B cell (primary cell): ENCODE measurements at regions of chr18 and their contacts with region 1.

Region 1: GRCh38 chr18:45879681-45880655 is 54.5 kb downstream of the SIGLEC15 start:
- DNase-seq: peak; percentile 76
- ATAC-seq: peak; percentile 95
- H3K4me3 ChIP-seq: no peak overlapping the region
- H3K4me3 Mint-ChIP-seq: no peak overlapping the region
- H3K27ac ChIP-seq: no peak overlapping the region
- H3K27ac Mint-ChIP-seq: no peak overlapping the region
- H3K4me1 ChIP-seq: peaks cover 2 to 6% of the 10 kb centered on the region in 2 donors
- H3K4me1 Mint-ChIP-seq: peaks cover 9% of the 10 kb centered on the region
- H3K27me3 ChIP-seq: no peaks in the 10 kb centered on the region
- H3K27me3 Mint-ChIP-seq: no peaks in the 10 kb centered on the region
- CTCF ChIP-seq: peak; percentile 100

Region 2: GRCh38 chr18:45621061-45621511 is 258.9 kb before region 1 on chr18:
- CTCF ChIA-PET with region 1: interaction called, 10 read pairs
- POLR2A ChIA-PET with region 1: no interaction called
- intact Hi-C with region 1: loop called (anchors 1 kb)
- DNase-seq: peak; percentile 58
- ATAC-seq: peak; percentile 63
- H3K4me3 ChIP-seq: no peak overlapping the region
- H3K4me3 Mint-ChIP-seq: no peak overlapping the region
- H3K27ac ChIP-seq: no peak overlapping the region
- H3K27ac Mint-ChIP-seq: no peak overlapping the region
- H3K4me1 ChIP-seq: no peaks in the 10 kb centered on the region
- H3K4me1 Mint-ChIP-seq: peaks cover 1% of the 10 kb centered on the region
- H3K27me3 ChIP-seq: peaks cover 0 to 2% (median 0%) of the 10 kb centered on the region in 4 experiments
- H3K27me3 Mint-ChIP-seq: peaks cover 19% of the 10 kb centered on the region
- CTCF ChIP-seq: peak; percentile 99

Region 3: DNA sequence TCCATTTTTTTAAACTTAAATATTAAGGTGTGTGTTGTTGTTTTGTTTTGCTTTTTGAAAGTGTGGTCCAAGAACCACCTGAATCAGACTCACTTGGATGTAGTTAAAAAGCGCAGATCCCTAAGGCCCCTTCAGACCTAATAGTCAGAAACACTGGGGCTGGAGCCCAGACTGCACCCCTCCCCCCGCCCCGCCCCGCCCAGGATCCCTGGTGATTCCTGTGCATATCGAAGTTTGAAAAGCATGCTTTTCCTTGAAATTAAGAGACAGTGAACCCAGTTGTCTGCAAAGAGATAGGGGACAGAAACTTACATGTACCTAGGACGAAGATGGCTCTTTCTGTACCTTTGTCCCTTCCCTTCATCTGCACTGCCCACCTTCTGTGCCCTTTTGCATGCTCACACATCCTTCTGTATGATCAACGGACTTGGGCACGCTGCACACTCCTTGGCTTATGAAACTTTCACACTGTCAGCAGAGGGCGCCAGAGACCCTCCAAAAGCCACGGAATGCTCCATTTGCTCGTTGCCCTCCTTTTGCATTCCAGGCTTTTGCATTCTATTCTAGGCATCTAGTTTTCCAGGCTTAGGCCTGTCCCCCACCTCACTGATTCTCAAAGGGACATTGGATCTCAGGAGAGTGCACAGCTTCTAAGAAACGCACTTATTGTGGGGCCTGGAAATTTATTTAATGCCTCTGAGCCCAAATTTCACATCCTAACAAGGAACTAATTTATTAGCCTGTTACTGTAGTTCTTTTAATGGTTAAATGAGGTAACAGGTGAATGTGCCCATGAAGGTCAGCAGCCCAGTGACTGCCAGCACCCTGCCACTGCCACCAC is 188.8 kb before region 1 on chr18:
- CTCF ChIA-PET with region 1: interaction called, 139 read pairs
- POLR2A ChIA-PET with region 1: no interaction called
- intact Hi-C with region 1: loop called (anchors 1 kb)
- DNase-seq: peak; percentile 77
- ATAC-seq: no peak
- H3K4me3 ChIP-seq: no peak overlapping the region
- H3K4me3 Mint-ChIP-seq: no peak overlapping the region
- H3K27ac ChIP-seq: no peak overlapping the region
- H3K27ac Mint-ChIP-seq: peak overlapping the region; percentile 43
- H3K4me1 ChIP-seq: peaks cover 32 to 44% of the 10 kb centered on the region in 2 donors
- H3K4me1 Mint-ChIP-seq: peaks cover 40% of the 10 kb centered on the region
- H3K27me3 ChIP-seq: no peaks in the 10 kb centered on the region
- H3K27me3 Mint-ChIP-seq: peaks cover 7% of the 10 kb centered on the region
- CTCF ChIP-seq: peak; percentile 86

Region 4: GRCh38 chr18:45730832-45731575 is 149.0 kb before region 1 on chr18:
- CTCF ChIA-PET with region 1: interaction called, 70 read pairs
- POLR2A ChIA-PET with region 1: no interaction called
- intact Hi-C with region 1: no loop called
- DNase-seq: no peak
- ATAC-seq: no peak
- H3K4me3 ChIP-seq: no peak overlapping the region
- H3K4me3 Mint-ChIP-seq: no peak overlapping the region
- H3K27ac ChIP-seq: no peak overlapping the region
- H3K27ac Mint-ChIP-seq: no peak overlapping the region
- H3K4me1 ChIP-seq: no peaks in the 10 kb centered on the region
- H3K4me1 Mint-ChIP-seq: no peaks in the 10 kb centered on the region
- H3K27me3 ChIP-seq: no peaks in the 10 kb centered on the region
- H3K27me3 Mint-ChIP-seq: peaks cover 5% of the 10 kb centered on the region
- CTCF ChIP-seq: no peak

Region 5: DNA sequence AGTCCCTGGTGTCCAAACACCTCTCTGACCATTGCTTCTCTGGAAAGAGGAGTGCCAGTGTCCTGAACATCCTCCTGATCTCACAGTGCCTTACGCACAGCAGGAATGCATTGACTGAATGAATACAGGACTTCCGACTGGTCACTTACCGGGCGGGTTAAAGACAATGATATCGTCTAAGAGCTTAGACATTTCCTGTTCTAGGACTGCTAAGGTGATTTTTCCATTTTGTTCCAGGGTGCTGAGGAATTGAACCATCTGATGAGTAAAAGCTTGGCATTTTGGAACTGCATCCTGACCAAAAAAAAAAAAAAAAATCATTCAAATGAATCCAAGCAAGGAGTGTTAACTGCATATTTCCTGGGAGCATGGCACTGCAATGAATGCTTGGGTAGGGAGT is 14.5 kb before region 1 on chr18:
- CTCF ChIA-PET with region 1: interaction called, 36 read pairs
- POLR2A ChIA-PET with region 1: no interaction called
- intact Hi-C with region 1: no loop called
- DNase-seq: no peak
- ATAC-seq: no peak
- H3K4me3 ChIP-seq: no peak overlapping the region
- H3K4me3 Mint-ChIP-seq: no peak overlapping the region
- H3K27ac ChIP-seq: no peak overlapping the region
- H3K27ac Mint-ChIP-seq: no peak overlapping the region
- H3K4me1 ChIP-seq: no peaks in the 10 kb centered on the region
- H3K4me1 Mint-ChIP-seq: no peaks in the 10 kb centered on the region
- H3K27me3 ChIP-seq: no peaks in the 10 kb centered on the region
- H3K27me3 Mint-ChIP-seq: no peaks in the 10 kb centered on the region
- CTCF ChIP-seq: no peak

Region 6: DNA sequence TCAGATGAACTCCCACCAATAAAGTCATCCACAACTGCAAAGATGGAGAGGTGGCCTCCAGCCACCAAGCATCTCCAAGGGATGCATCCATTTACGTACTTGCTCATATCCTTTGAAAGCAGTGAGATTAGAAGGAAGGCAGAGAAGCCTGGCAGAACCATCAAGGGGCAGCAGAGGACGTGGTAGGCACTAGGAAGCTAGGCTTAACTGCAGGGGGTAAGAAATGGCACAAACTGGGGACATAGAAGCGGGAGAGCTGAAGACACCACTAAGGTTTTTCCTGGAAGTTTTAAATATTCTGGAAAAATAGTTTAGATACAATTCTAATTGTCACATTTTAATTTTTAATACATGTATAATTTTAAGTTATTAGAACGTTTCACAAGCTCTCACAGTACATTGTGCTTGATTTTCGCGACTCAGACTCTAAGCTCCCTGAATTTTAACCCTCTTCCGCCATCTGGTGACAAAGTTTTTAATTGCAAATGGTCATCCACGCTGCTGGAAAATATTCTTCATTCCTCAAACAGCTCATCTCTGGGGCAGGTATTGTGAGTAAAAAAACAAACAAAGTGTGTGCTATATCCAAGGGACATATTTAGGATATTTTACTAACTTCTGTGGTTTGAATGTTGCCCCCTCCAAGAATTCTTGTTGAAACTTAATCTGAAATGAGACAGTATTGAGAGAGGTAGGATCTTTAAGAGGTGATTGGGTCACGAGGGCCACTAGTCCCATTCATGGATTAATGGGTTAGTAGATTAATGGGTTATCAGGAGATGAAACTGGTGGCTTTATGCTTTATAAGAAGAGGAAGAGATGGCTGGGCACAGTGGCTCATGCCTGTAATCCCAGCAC is 193.7 kb after region 1 on chr18:
- CTCF ChIA-PET with region 1: interaction called, 10 read pairs
- POLR2A ChIA-PET with region 1: no interaction called
- intact Hi-C with region 1: no loop called
- DNase-seq: peak; percentile 69
- ATAC-seq: peak; percentile 54
- H3K4me3 ChIP-seq: no peak overlapping the region
- H3K4me3 Mint-ChIP-seq: no peak overlapping the region
- H3K27ac ChIP-seq: no peak overlapping the region
- H3K27ac Mint-ChIP-seq: no peak overlapping the region
- H3K4me1 ChIP-seq: peaks cover 17 to 26% of the 10 kb centered on the region in 2 donors
- H3K4me1 Mint-ChIP-seq: peaks cover 19% of the 10 kb centered on the region
- H3K27me3 ChIP-seq: peaks cover 0 to 34% (median 13%) of the 10 kb centered on the region in 4 experiments
- H3K27me3 Mint-ChIP-seq: peaks cover 6% of the 10 kb centered on the region
- CTCF ChIP-seq: peak; percentile 78

Region 7: DNA sequence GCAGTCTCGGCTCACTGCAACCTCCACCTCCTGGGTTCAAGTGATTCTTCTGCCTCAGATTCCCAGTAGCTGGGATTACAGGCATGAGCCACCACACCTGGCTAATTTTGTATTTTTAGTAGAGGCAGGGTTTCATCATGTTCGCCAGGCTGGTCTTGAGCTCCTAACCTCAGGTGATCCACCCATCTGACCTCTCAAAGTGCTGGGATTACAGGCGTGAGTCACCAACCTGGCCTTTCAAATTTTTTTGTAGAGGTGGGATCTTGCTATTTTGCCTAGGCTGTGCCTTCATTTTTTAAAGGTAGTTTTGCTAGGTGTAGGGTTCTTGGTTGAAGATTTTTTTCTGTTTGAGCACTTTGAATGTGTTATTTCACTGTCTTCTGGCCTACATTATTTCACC is 230.4 kb after region 1 on chr18:
- CTCF ChIA-PET with region 1: no interaction called
- POLR2A ChIA-PET with region 1: no interaction called
- intact Hi-C with region 1: no loop called
- DNase-seq: no peak
- ATAC-seq: no peak
- H3K4me3 ChIP-seq: no peak overlapping the region
- H3K4me3 Mint-ChIP-seq: no peak overlapping the region
- H3K27ac ChIP-seq: no peak overlapping the region
- H3K27ac Mint-ChIP-seq: no peak overlapping the region
- H3K4me1 ChIP-seq: no peaks in the 10 kb centered on the region
- H3K4me1 Mint-ChIP-seq: peaks cover 9% of the 10 kb centered on the region
- H3K27me3 ChIP-seq: no peaks in the 10 kb centered on the region
- H3K27me3 Mint-ChIP-seq: no peaks in the 10 kb centered on the region
- CTCF ChIP-seq: no peak